AG04449 (cell line): ENCODE measurements at regions of chr15 and their contacts with region 1.

Region 1: DNA sequence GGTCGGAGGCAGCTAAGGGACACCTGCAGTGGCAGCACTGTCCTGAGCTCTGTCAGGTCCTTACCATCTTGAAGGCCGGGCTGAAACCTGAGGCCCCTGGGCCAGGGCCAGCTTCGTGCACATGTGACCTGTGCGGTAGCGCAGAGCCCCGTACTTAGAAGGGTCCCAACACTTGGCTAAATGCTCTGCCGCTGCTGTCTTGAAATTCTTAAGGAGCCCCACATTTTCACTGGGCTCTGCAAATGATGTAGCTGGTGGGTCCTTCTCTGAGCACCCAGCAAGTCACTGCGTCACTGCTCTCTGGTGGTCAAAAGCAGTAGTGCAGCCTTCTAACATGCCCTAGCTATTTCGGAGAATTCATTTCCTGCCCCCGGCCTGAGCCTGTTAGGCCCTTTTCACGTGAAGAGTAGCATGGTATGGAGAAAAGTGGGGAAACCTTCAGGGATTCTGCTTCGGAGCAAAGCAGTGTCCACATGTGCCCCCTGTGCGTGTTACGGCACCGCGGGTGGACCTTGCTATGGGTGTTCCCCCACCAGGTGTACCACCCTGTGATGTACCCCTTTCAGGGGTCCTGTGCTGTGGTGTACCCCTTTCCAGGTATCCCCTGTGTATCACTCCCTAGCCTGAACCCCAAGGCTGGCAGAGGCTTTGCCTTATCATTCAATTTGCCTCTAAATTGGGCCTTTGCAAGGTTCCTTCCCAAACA is 79.7 kb downstream of the TMEM266 start:
- DNase-seq: no peak
- H3K4me3 ChIP-seq: no peak overlapping the region
- CTCF ChIP-seq: peak; percentile 89

Region 2: GRCh38 chr15:75809986-75810750 is 329.4 kb before region 1 on chr15:
- CTCF ChIA-PET with region 1: interaction called, 74 read pairs
- POLR2A ChIA-PET with region 1: no interaction called
- DNase-seq: no peak
- H3K4me3 ChIP-seq: no peak overlapping the region
- CTCF ChIP-seq: peak; percentile 38

Region 3: DNA sequence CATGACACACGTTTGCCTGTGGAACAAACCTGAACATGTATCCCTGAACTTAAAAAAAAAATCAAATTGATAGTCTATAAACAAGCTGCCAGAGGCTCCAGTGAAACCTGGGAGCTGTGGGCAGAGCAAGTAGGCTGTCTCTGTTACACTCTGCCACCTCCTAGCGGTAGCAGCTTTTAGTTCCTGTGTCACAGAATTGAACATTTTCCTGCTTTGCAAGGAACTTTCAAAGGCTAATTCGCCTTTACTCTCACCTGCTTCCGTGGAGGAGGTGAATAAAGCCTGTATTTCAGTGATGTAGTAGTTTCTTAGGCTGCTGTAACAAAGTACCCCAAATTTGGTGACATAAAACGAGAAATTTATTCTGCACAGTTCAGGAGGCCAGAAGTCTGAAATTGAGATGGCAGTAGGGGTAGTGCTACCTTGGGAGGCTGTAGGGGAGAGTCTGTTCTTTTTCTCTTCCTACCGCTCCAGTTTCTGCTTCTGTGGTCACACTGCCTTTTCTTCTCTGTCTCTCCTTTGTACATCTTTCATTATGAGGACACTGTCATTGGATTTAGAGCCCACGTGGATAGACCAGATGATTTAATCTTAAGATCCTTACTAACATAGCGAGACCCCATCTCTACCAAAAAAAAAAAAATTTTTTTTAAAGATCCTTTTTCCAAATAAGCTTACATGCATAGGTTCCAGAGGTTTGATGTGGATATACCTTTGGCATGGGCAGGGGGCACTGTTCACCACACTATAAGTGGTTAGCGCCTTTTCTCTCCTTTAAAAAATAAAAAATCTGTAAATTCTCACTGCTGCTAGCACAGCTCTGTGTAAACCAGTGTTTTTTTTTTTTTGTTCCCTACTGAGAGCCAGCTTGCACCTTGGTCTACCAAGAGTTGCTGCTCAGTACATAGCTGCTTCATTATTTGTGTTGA is 210.6 kb before region 1 on chr15:
- CTCF ChIA-PET with region 1: interaction called, 18 read pairs
- POLR2A ChIA-PET with region 1: no interaction called
- DNase-seq: no peak
- H3K4me3 ChIP-seq: no peak overlapping the region
- CTCF ChIP-seq: peak; percentile 32

Region 4: DNA sequence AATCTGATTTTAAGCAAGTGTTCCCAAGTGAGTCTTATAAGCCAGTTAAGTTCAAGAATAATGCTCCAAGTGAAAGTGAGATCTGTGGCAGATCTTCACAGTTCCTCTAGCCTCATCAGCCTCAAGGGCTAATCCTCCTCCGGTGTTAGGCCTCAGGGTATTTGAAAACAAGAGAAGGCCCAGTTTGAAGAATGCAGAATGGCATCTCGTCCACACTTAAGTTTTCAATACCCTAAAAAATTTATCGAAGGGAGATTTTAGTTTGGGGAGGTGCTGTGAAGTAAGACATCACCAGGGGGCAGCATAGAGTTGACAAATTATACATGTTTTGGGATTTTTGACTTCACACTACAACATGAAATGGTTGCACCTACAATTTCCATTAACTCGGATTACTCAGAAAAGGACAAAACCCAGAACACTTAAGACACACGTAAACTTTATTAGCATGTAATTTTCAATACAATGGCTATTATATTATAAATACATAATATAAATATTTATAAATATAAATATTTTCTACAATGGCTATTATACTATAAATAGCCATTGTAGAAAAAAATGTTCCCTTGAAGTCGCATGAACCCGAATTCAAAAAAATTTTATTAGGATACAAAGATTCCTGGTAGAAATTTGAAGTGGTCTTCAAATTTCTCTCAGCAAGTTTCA is 82.1 kb before region 1 on chr15:
- CTCF ChIA-PET with region 1: interaction called, 230 read pairs
- POLR2A ChIA-PET with region 1: interaction called, 3 read pairs
- DNase-seq: no peak
- H3K4me3 ChIP-seq: peak overlapping the region; percentile 29
- CTCF ChIP-seq: peak; percentile 57

Region 5: DNA sequence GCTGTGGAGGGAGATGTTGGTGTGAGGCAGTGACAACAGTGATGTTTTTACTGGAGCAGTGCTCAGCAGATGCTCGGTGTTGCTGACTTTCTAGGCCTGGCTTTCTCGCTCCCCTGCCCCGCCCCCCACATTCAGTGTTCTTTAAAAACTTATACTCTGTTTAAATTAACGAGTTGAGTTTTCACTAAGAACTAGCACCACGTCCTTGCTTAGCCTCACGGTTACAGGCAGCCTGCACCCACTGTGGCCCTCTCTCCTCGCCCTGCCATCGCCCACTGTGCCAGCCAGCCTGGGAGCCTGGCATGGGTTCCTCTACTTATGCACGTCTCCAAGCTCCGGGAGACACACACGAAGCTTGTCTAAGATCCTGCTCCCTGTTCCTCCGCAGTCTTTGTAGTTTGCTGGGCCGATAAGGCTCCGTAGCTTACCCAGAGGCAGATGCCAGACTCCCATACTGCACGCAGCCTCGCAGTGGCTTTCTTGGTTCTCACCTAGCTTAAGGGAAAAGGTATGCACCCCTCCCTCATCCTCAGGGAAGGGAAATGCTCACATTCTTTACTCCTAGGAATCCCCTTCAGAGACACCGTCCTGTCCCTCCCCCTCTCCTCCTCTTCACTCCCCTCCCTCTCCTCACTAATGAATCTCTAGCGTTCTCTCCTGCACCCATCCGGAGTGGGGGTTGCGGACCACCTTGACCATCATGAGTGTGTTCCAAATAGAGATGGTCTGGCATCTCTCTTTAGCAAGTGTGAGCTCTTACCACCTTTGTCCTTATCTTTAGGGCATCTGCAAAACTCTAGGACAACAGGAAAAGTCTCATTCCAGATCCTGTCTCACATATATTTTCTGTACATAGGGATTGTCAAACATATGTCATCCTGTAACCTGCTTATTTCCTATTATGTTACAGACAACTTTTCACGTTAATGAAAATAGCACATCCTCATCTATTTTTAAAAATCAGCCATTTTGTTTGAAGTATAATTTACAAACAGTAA is 23.3 kb before region 1 on chr15:
- CTCF ChIA-PET with region 1: interaction called, 14 read pairs
- POLR2A ChIA-PET with region 1: no interaction called
- DNase-seq: no peak
- H3K4me3 ChIP-seq: no peak overlapping the region
- CTCF ChIP-seq: no peak

Region 6: GRCh38 chr15:76127880-76128279 is 11.6 kb before region 1 on chr15:
- CTCF ChIA-PET with region 1: interaction called, 62 read pairs
- POLR2A ChIA-PET with region 1: no interaction called
- DNase-seq: no peak
- H3K4me3 ChIP-seq: no peak overlapping the region
- CTCF ChIP-seq: no peak

Region 7: DNA sequence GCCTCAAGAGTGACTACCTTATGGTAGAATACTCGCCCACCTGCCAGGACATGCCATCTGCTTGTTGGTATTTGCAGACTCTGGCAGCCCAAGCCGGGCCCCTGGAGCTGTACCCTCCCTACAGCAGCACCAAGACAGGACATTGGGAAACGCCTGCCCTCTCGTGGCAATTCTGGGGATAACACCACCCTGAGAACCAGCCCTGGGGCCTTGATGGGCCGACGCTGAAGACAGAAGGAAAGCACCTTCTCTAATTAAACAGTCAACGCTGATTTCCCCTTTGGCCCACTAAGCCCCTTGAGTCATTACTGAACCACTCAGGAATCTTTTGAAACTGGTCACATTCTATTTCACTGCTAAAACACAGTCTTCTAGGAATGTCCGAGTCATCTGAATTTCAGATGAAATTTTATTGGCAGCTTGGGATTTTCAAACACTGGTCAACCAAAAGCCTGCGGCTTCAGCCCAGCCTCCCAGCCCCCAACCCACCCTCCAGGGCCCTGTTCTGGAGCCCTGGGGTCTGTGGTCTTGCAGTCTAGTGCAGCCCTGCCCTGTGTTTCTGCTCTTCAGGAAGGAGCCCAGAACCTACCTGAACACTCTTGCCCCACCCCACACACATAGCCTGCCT is 11.6 kb after region 1 on chr15:
- CTCF ChIA-PET with region 1: interaction called, 171 read pairs
- POLR2A ChIA-PET with region 1: no interaction called
- DNase-seq: peak; percentile 44
- H3K4me3 ChIP-seq: no peak overlapping the region
- CTCF ChIP-seq: peak; percentile 91